ENCODE measurements at regions of chr20 and their contacts with region 1.

Region 1: GRCh38 chr20:62052842-62053464 is 12.7 kb downstream of the TAF4 start:
- DNase-seq: no peak
- H3K4me3 ChIP-seq: no peak overlapping the region
- H3K27ac ChIP-seq: no peak overlapping the region
- H3K4me1 ChIP-seq: no peaks in the 10 kb centered on the region
- H3K27me3 ChIP-seq: no peaks in the 10 kb centered on the region
- CTCF ChIP-seq: no peak

Region 2: GRCh38 chr20:64038565-64039292 is 1985.8 kb after region 1 on chr20:
- CTCF ChIA-PET with region 1: interaction called, 13 read pairs
- POLR2A ChIA-PET with region 1: no interaction called
- intact Hi-C with region 1: no loop called
- DNase-seq: peak; percentile 68
- H3K4me3 ChIP-seq: peak overlapping the region; percentile 46
- H3K27ac ChIP-seq: no peak overlapping the region
- H3K4me1 ChIP-seq: peaks cover 17% of the 10 kb centered on the region
- H3K27me3 ChIP-seq: peaks cover 50% of the 10 kb centered on the region
- CTCF ChIP-seq: peak; percentile 77